AG04450 (cell line): ENCODE measurements at regions of chr1 and their contacts with region 1.

Region 1: DNA sequence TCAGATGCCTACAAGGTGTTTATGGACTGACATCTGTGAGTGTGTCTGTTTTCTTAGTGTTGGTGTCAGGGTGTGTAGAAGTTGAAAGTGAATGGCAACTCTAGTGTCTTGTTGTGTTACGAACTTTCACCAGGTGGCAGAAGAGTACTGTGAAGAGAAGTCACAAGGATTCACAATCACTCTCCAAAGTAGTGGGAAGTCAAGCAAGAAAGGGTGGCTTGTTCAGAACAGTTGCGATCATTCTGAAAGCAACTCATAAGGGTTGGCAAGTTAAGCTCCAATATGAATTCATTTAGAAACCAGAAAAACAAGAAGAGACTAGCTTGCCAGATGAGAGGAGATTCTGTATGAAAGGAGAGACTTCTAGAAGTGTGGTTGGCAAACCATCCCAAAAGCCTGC is 86.1 kb downstream of the FASLG start:
- DNase-seq: peak; percentile 72
- H3K4me3 ChIP-seq: no peak overlapping the region
- H3K27ac ChIP-seq: no peak overlapping the region
- H3K27me3 ChIP-seq: peaks cover 2% of the 10 kb centered on the region
- CTCF ChIP-seq: peak; percentile 79

Region 2: DNA sequence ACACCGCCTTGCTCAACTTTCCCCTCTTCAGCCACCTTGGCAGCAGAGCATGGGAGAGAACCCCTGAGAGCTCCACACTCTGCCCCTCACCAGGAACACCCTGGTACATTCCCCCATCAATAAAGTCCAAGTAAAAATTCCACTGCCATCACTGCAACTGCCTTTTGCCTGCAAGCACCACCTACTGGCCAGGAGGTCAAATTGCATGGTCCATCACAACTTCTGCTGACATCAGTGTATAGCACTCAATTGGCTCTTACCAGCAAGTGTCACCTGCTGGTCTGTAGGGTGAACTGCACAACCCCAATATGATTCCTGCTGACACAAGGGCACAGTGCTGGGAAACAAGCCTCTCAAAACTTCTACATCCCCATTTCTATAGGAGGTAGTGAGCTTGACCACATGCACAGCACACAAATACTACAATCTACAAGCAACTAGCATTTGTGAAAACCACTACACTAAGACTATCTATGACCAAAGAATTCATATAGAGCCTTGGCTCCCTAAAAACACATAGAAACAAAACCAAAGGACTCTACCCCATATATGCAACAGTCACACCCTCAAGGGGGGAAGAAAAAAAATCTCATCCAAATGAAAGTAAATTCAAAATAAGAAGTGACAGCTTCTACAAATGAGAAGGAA is 16.9 kb before region 1 on chr1:
- CTCF ChIA-PET with region 1: interaction called, 16 read pairs
- POLR2A ChIA-PET with region 1: no interaction called
- DNase-seq: no peak
- H3K4me3 ChIP-seq: no peak overlapping the region
- H3K27ac ChIP-seq: no peak overlapping the region
- H3K27me3 ChIP-seq: no peaks in the 10 kb centered on the region
- CTCF ChIP-seq: peak; percentile 44

Region 3: DNA sequence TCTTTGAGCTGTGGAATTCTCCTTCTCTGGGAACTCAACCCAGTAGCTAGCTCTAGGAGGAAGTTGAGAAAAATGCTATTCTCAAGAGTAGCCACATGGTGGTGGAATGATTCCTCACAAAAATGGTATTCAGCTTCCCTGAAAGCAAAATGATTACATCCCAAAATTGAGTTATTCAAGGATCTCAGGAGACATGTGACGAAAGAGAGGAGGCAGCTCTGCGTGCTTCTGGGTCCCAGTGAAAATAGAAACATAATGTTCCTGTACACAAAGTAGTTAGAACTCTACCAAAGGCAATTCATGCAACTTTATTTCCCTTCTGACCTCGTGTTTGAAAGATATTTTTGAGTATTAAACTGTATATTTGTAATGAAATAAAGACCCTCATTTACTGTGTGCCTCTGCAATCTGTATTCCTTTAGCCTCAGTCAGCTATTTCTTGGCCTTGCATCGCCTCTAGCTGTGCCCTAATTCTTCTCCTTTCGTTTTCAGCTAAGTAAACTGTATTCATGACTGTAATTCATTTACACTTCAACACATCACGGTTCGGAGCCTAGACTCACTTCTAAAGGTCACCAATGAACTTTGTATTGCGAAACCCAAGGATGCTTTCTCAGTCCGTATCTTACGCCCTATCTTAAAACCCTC is 81.2 kb after region 1 on chr1:
- CTCF ChIA-PET with region 1: interaction called, 41 read pairs
- POLR2A ChIA-PET with region 1: interaction called, 3 read pairs
- DNase-seq: peak; percentile 80
- H3K4me3 ChIP-seq: no peak overlapping the region
- H3K27ac ChIP-seq: peak overlapping the region; percentile 59
- H3K27me3 ChIP-seq: no peaks in the 10 kb centered on the region
- CTCF ChIP-seq: peak; percentile 72

Region 4: GRCh38 chr1:172895050-172895460 is 150.0 kb after region 1 on chr1:
- CTCF ChIA-PET with region 1: no interaction called
- POLR2A ChIA-PET with region 1: no interaction called
- DNase-seq: no peak
- H3K4me3 ChIP-seq: no peak overlapping the region
- H3K27ac ChIP-seq: no peak overlapping the region
- H3K27me3 ChIP-seq: no peaks in the 10 kb centered on the region
- CTCF ChIP-seq: no peak

Region 5: DNA sequence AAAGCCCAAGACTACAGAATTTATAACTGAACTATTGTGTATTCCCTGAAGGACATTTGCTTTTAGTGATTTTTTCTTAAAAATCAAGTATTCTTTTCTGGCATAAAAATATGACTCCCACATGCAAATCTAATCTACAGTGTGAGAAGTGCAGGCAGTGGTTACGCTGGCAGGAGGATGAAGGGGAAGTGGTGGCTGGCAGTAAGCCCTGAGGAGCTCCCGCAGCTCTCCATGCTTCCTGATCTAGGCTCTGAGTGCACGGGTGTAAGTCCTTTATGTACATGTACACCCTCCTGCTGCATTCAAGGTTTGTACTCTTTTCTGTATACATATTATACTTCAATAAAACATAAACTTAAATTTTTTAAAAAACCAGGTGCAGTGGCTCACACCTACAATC is 664.6 kb after region 1 on chr1:
- CTCF ChIA-PET with region 1: interaction called, 12 read pairs
- POLR2A ChIA-PET with region 1: no interaction called
- DNase-seq: no peak
- H3K4me3 ChIP-seq: no peak overlapping the region
- H3K27ac ChIP-seq: no peak overlapping the region
- H3K27me3 ChIP-seq: no peaks in the 10 kb centered on the region
- CTCF ChIP-seq: no peak

Region 6: GRCh38 chr1:173429471-173430402 is 684.7 kb after region 1 on chr1:
- CTCF ChIA-PET with region 1: interaction called, 34 read pairs
- POLR2A ChIA-PET with region 1: no interaction called
- DNase-seq: peak; percentile 91
- H3K4me3 ChIP-seq: peak overlapping the region; percentile 43
- H3K27ac ChIP-seq: peak overlapping the region; percentile 75
- H3K27me3 ChIP-seq: no peaks in the 10 kb centered on the region
- CTCF ChIP-seq: peak; percentile 60

Region 7: DNA sequence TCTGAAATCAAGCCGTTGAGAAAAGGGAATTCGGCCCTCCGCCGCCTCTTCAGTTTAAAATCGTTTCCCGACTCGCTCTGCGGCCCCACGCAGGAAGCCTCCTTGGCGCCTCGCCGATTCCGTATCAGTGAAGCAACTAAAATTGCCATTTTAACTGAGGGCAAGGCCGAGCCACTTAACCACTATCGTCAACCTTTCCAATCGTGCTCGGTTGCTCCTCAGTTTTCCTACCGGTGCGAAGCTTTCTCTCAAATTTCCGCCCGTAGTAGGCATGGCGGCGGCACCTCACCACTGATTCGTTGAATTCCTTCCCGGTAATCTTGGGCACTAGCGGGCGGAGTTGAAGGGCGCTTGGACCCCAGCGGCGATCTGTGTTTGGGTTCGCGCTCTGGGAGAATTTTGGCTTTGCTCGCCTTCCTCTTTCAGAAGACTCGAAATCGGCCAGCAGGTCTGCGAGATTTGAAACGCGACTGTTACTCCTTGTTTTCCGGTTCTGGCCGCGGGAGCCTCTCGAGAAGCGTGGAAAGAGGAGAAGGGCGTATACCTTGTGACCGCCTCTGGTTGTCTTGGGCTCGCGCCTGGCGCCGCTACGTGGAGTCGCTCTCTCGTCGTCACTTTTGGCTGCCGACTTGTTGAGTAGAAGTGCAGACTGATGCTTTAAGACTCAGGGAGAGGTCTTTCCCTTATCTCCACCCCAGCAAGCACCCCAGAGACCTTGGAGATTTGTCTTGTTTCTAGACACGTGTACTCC is 1079.5 kb after region 1 on chr1 and contains the starts of genes CENPL and DARS2:
- CTCF ChIA-PET with region 1: interaction called, 10 read pairs
- POLR2A ChIA-PET with region 1: no interaction called
- DNase-seq: peak; percentile 96
- H3K4me3 ChIP-seq: peak within 1 kb of the TSS; percentile 98
- H3K27ac ChIP-seq: peak within 1 kb of the TSS; percentile 98
- H3K27me3 ChIP-seq: no peaks in the 10 kb centered on the region
- CTCF ChIP-seq: no peak
- polyA plus RNA-seq, gene CENPL: 5.8 and 8.7 TPM in 2 replicates
- polyA plus RNA-seq, gene DARS2: 20.2 and 25.1 TPM in 2 replicates